ENCODE measurements at regions of chr5 and their contacts with region 1.

Region 1: DNA sequence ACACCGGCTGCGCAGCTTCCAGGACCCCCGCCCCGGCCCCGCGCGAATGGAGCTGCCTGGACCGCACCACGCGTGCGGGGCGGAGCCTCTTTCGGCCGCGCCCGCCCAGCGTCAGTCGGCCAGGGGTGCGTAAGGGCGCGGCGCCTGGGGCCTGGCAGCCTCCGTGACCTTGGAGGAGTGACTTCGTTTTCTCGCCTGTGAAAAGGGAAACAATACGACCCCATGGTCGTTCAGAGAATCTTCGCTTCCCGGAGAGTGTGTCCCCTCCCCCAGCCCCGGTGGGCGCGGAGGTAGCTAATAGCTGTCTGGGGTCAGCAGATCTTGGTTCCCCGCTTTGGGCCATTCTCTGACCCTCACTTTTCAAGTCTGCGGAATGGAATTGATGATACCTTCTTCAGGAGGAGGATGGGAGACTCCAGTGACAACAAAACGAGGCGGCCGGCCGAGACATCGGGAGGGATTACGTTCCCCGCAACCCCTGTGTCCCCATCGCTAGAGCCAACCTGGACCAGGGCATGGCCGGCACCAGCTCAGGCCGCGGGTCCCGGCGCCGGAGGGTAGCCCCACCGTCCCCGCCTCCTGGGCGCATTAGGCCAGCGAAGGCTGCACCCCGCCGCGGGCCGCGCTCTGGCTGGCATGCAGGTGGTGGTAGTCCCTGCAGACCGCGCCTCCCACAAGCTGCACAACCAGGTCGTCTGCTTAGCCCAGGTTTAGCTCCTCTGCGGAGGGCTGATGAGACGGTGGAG is 5.5 kb upstream of the CDHR2 start:
- DNase-seq: peak; percentile 88
- ATAC-seq: peak; percentile 76
- H3K4me3 ChIP-seq: peak overlapping the region; percentile 64 to 79 (median 73)
- H3K4me3 Mint-ChIP-seq: peak overlapping the region; percentile 96
- H3K27ac ChIP-seq: peak overlapping the region; percentile 82 to 88
- H3K27ac Mint-ChIP-seq: peak overlapping the region; percentile 98
- H3K4me1 ChIP-seq: peaks cover 30 to 36% of the 10 kb centered on the region in 2 donors
- H3K4me1 Mint-ChIP-seq: peaks cover 47% of the 10 kb centered on the region
- H3K27me3 ChIP-seq: no peaks in the 10 kb centered on the region
- H3K27me3 Mint-ChIP-seq: no peaks in the 10 kb centered on the region
- CTCF ChIP-seq: no peak

Region 2: GRCh38 chr5:176361437-176362232 is 182.0 kb before region 1 on chr5 and contains the start of gene KIAA1191:
- CTCF ChIA-PET with region 1: interaction called, 4 read pairs
- POLR2A ChIA-PET with region 1: no interaction called
- intact Hi-C with region 1: loop called (anchors 2 kb)
- DNase-seq: peak; percentile 96
- ATAC-seq: peak; percentile 87
- H3K4me3 ChIP-seq: peak within 1 kb of the TSS; percentile 47 to 94 (median 82)
- H3K4me3 Mint-ChIP-seq: peak within 1 kb of the TSS; percentile 98
- H3K27ac ChIP-seq: peak within 1 kb of the TSS; percentile 77 to 92
- H3K27ac Mint-ChIP-seq: peak within 1 kb of the TSS; percentile 98
- H3K4me1 ChIP-seq: peaks cover 21 to 36% of the 10 kb centered on the region in 2 donors
- H3K4me1 Mint-ChIP-seq: peaks cover 42% of the 10 kb centered on the region
- H3K27me3 ChIP-seq: no peaks in the 10 kb centered on the region
- H3K27me3 Mint-ChIP-seq: no peaks in the 10 kb centered on the region
- CTCF ChIP-seq: peak; percentile 31
- total RNA-seq, gene KIAA1191: 82.9 and 88.1 TPM in 2 replicates

Region 3: GRCh38 chr5:176447982-176448608 is 95.5 kb before region 1 on chr5 and contains the start of gene FAF2:
- CTCF ChIA-PET with region 1: interaction called, 11 read pairs
- POLR2A ChIA-PET with region 1: interaction called, 8 read pairs
- intact Hi-C with region 1: loop called (anchors 1 kb)
- DNase-seq: peak; percentile 99
- ATAC-seq: peak; percentile 91
- H3K4me3 ChIP-seq: peak within 1 kb of the TSS; percentile 77 to 99 (median 99)
- H3K4me3 Mint-ChIP-seq: peak within 1 kb of the TSS; percentile 98
- H3K27ac ChIP-seq: peak within 1 kb of the TSS; percentile 81 to 93
- H3K27ac Mint-ChIP-seq: peak within 1 kb of the TSS; percentile 99
- H3K4me1 ChIP-seq: peaks cover 16 to 20% of the 10 kb centered on the region in 2 donors
- H3K4me1 Mint-ChIP-seq: peaks cover 32% of the 10 kb centered on the region
- H3K27me3 ChIP-seq: no peaks in the 10 kb centered on the region
- H3K27me3 Mint-ChIP-seq: no peaks in the 10 kb centered on the region
- CTCF ChIP-seq: peak; percentile 92
- total RNA-seq, gene FAF2: 35.1 and 41.3 TPM in 2 replicates

Region 4: DNA sequence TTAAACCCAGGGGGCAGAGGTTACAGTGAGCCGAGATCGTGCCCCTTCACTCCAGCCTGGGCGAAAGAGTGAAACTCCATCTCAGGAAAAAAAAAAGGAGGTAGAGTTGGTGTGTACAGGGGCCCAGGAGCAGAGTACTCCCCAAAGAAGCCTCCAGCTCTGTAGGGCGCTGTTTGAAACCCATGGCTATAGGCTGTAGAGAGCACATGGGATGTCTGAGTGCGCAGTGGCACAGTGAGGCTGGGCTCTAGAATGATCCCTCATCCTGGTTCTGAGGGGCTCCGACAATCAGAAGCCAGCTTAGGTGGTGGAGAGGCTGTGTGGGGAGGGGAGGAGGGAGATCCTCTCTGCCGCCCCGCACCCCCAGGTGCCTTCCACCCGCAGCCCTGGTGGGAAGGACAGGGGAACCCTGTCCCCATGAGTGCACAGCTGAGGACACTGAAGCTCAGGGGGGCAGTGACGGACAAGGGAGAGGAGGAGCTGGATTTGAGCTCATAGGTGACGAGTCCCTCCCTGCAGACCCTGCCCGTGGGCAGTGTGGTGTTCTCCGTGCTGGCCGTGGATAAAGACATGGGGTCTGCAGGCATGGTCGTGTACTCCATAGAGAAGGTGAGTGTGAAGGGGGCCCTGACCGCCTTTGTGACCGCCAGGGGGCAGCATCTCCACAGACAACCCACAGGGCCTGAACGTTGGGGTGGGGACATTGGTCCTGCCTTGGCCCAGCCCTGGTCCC is 30.1 kb after region 1 on chr5:
- CTCF ChIA-PET with region 1: interaction called, 18 read pairs
- POLR2A ChIA-PET with region 1: no interaction called
- intact Hi-C with region 1: no loop called
- DNase-seq: peak; percentile 82
- ATAC-seq: peak; percentile 79
- H3K4me3 ChIP-seq: no peak overlapping the region
- H3K4me3 Mint-ChIP-seq: no peak overlapping the region
- H3K27ac ChIP-seq: no peak overlapping the region
- H3K27ac Mint-ChIP-seq: no peak overlapping the region
- H3K4me1 ChIP-seq: peaks cover 0 to 11% of the 10 kb centered on the region in 2 donors
- H3K4me1 Mint-ChIP-seq: peaks cover 5% of the 10 kb centered on the region
- H3K27me3 ChIP-seq: peaks cover 0 to 7% (median 2%) of the 10 kb centered on the region in 4 experiments
- H3K27me3 Mint-ChIP-seq: peaks cover 12% of the 10 kb centered on the region
- CTCF ChIP-seq: peak; percentile 92

Region 5: GRCh38 chr5:176647030-176647866 is 103.6 kb after region 1 on chr5 and contains the start of gene TSPAN17:
- CTCF ChIA-PET with region 1: interaction called, 7 read pairs
- POLR2A ChIA-PET with region 1: interaction called, 5 read pairs
- intact Hi-C with region 1: loop called (anchors 2 kb)
- DNase-seq: peak; percentile 99
- ATAC-seq: peak; percentile 97
- H3K4me3 ChIP-seq: peak within 1 kb of the TSS; percentile 12 to 72 (median 64)
- H3K4me3 Mint-ChIP-seq: peak within 1 kb of the TSS; percentile 92
- H3K27ac ChIP-seq: peak within 1 kb of the TSS; percentile 36 to 68
- H3K27ac Mint-ChIP-seq: peak within 1 kb of the TSS; percentile 90
- H3K4me1 ChIP-seq: peaks cover 21 to 52% of the 10 kb centered on the region in 2 donors
- H3K4me1 Mint-ChIP-seq: peaks cover 50% of the 10 kb centered on the region
- H3K27me3 ChIP-seq: no peaks in the 10 kb centered on the region
- H3K27me3 Mint-ChIP-seq: no peaks in the 10 kb centered on the region
- CTCF ChIP-seq: no peak
- total RNA-seq, gene TSPAN17: 21.0 and 23.7 TPM in 2 replicates